B cell (primary cell): ENCODE measurements at regions of chr3 and their contacts with region 1.

Region 1: GRCh38 chr3:186570096-186570940 is at the start of gene DNAJB11:
- DNase-seq: peak; percentile 99
- ATAC-seq: peak; percentile 85
- H3K4me3 ChIP-seq: peak within 1 kb of the TSS; percentile 86 to 98 (median 90)
- H3K4me3 Mint-ChIP-seq: peak within 1 kb of the TSS; percentile 98
- H3K27ac ChIP-seq: peak within 1 kb of the TSS; percentile 91 to 96
- H3K27ac Mint-ChIP-seq: peak within 1 kb of the TSS; percentile 98
- H3K4me1 ChIP-seq: peaks cover 28 to 40% of the 10 kb centered on the region in 2 donors
- H3K4me1 Mint-ChIP-seq: peaks cover 51% of the 10 kb centered on the region
- H3K27me3 ChIP-seq: no peaks in the 10 kb centered on the region
- H3K27me3 Mint-ChIP-seq: no peaks in the 10 kb centered on the region
- CTCF ChIP-seq: no peak
- total RNA-seq, gene DNAJB11: 27.7 and 28.5 TPM in 2 replicates

Region 2: DNA sequence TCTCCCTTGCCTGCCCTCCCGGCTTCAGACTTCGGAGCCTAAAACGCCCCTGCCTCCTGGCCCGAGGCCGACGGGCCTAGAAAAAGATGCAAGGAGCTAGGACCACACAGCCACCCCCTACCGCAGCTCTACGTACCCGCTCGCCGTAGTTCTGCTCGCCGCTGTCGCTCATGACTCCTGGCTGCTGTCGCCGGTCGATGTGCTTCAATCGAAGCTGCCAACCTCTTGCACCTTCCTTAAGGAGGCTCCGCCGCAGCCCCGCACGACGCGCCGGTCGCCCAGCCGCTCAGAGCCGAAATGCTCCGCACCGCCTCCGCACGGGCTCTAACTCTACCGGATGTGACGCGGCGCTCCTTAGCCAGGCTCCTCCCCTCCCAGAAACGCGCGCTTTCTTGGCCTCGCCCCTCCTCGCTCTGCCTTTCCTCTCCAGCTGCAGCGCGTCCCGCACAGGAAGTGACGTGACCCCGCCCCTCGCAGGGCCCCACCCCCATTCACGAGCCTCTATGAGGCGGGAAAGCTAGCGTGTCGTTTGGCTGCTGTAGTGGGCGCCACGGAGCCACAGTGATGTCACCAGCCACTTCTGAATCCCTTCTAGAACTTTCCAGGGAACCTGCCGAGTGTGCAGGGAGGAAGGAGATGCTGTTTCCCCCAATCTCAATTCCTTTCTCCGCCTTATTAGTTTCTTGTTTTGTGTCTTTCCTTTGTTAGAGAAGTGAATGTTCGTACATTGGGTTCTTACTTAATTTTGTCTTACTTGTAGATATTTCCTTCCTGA is 632.4 kb before region 1 on chr3 and contains the start of gene TRA2B:
- CTCF ChIA-PET with region 1: interaction called, 14 read pairs
- POLR2A ChIA-PET with region 1: no interaction called
- intact Hi-C with region 1: loop called (anchors 1 kb)
- DNase-seq: peak; percentile 99
- ATAC-seq: peak; percentile 89
- H3K4me3 ChIP-seq: peak within 1 kb of the TSS; percentile 99 to 100 (median 100)
- H3K4me3 Mint-ChIP-seq: peak within 1 kb of the TSS; percentile 99
- H3K27ac ChIP-seq: peak within 1 kb of the TSS; percentile 99 to 100
- H3K27ac Mint-ChIP-seq: peak within 1 kb of the TSS; percentile 100
- H3K4me1 ChIP-seq: peaks cover 26 to 28% of the 10 kb centered on the region in 2 donors
- H3K4me1 Mint-ChIP-seq: peaks cover 39% of the 10 kb centered on the region
- H3K27me3 ChIP-seq: no peaks in the 10 kb centered on the region
- H3K27me3 Mint-ChIP-seq: no peaks in the 10 kb centered on the region
- CTCF ChIP-seq: peak; percentile 51
- total RNA-seq, gene TRA2B: 218 and 220 TPM in 2 replicates

Region 3: GRCh38 chr3:186108941-186109865 is 461.1 kb before region 1 on chr3 and contains the start of gene ETV5:
- CTCF ChIA-PET with region 1: no interaction called
- POLR2A ChIA-PET with region 1: interaction called, 4 read pairs
- intact Hi-C with region 1: loop called (anchors 1 kb)
- DNase-seq: peak; percentile 95
- ATAC-seq: peak; percentile 93
- H3K4me3 ChIP-seq: peak within 1 kb of the TSS; percentile 51 to 73 (median 63)
- H3K4me3 Mint-ChIP-seq: peak within 1 kb of the TSS; percentile 96
- H3K27ac ChIP-seq: no peak within 1 kb of the TSS
- H3K27ac Mint-ChIP-seq: peak within 1 kb of the TSS; percentile 71
- H3K4me1 ChIP-seq: peaks cover 32 to 41% of the 10 kb centered on the region in 2 donors
- H3K4me1 Mint-ChIP-seq: peaks cover 38% of the 10 kb centered on the region
- H3K27me3 ChIP-seq: peaks cover 2 to 79% (median 41%) of the 10 kb centered on the region in 4 experiments
- H3K27me3 Mint-ChIP-seq: peaks cover 51% of the 10 kb centered on the region
- CTCF ChIP-seq: no peak
- total RNA-seq, gene ETV5: 0.10 and 0.74 TPM in 2 replicates

Region 4: GRCh38 chr3:186587183-186587582 is 16.9 kb after region 1 on chr3:
- CTCF ChIA-PET with region 1: no interaction called
- POLR2A ChIA-PET with region 1: no interaction called
- intact Hi-C with region 1: no loop called
- DNase-seq: no peak
- ATAC-seq: no peak
- H3K4me3 ChIP-seq: no peak overlapping the region
- H3K4me3 Mint-ChIP-seq: no peak overlapping the region
- H3K27ac ChIP-seq: no peak overlapping the region
- H3K27ac Mint-ChIP-seq: no peak overlapping the region
- H3K4me1 ChIP-seq: no peaks in the 10 kb centered on the region
- H3K4me1 Mint-ChIP-seq: no peaks in the 10 kb centered on the region
- H3K27me3 ChIP-seq: no peaks in the 10 kb centered on the region
- H3K27me3 Mint-ChIP-seq: no peaks in the 10 kb centered on the region
- CTCF ChIP-seq: no peak

Region 5: GRCh38 chr3:186653080-186653707 is 82.9 kb after region 1 on chr3:
- CTCF ChIA-PET with region 1: no interaction called
- POLR2A ChIA-PET with region 1: no interaction called
- intact Hi-C with region 1: loop called (anchors 1 kb)
- DNase-seq: peak; percentile 76
- ATAC-seq: peak; percentile 95
- H3K4me3 ChIP-seq: peak overlapping the region in 1 of 5 experiments; percentile 33
- H3K4me3 Mint-ChIP-seq: peak overlapping the region; percentile 69
- H3K27ac ChIP-seq: peak overlapping the region; percentile 34 to 86
- H3K27ac Mint-ChIP-seq: peak overlapping the region; percentile 92
- H3K4me1 ChIP-seq: peaks cover 28 to 29% of the 10 kb centered on the region in 2 donors
- H3K4me1 Mint-ChIP-seq: peaks cover 26% of the 10 kb centered on the region
- H3K27me3 ChIP-seq: no peaks in the 10 kb centered on the region
- H3K27me3 Mint-ChIP-seq: no peaks in the 10 kb centered on the region
- CTCF ChIP-seq: no peak

Region 6: DNA sequence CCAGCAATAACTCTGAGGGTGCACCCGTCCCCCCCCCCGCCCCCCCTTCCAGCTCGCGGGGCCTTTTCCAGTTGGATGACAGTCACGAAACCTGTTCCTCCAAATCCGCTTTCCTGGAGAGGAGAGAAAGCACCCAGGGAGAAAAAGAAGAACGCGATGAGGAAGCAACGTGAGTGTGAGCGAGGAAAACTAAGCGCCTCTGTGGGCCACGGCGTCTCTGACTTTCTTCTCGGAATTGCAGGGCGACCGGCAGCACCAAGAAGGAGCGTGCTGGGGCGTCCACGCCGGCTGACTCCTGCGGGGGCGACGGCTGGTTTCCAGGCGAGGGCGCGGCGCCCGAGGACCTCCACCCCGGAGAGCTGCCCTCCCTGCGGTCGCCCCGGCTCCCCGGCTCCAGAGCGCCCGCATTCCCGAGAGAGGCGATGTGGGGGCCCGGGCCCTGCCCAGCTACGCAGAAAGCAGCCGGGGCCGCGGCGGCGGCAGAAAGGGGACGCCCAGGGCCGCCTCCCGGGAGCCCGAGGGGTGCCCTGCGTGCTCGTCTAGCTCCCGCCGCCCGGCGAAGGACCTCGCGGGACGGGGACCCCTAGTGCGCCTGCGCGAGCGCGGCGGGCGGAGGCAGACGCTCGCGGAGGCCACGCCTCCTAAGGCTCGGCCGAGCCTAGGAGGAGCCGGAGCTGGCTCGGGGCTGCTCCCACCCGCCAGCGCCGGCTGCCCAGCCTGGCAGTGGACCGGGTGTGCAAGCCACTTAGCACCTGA is 256.8 kb after region 1 on chr3:
- CTCF ChIA-PET with region 1: no interaction called
- POLR2A ChIA-PET with region 1: no interaction called
- intact Hi-C with region 1: loop called (anchors 2 kb)
- DNase-seq: peak; percentile 92
- ATAC-seq: peak; percentile 95
- H3K4me3 ChIP-seq: peak overlapping the region in 4 of 5 experiments; percentile 57 to 78 (median 70)
- H3K4me3 Mint-ChIP-seq: peak overlapping the region; percentile 79
- H3K27ac ChIP-seq: peak overlapping the region in 1 of 2 donors; percentile 55
- H3K27ac Mint-ChIP-seq: peak overlapping the region; percentile 41
- H3K4me1 ChIP-seq: peaks cover 24 to 28% of the 10 kb centered on the region in 2 donors
- H3K4me1 Mint-ChIP-seq: peaks cover 21% of the 10 kb centered on the region
- H3K27me3 ChIP-seq: peaks cover 0 to 69% (median 42%) of the 10 kb centered on the region in 4 experiments
- H3K27me3 Mint-ChIP-seq: peaks cover 54% of the 10 kb centered on the region
- CTCF ChIP-seq: no peak